ENCODE measurements at regions of chr3 and their contacts with region 1.

Region 1: GRCh38 chr3:186759231-186759930 is 24.0 kb upstream of the EIF4A2 start:
- DNase-seq: no peak
- H3K4me3 ChIP-seq: no peak overlapping the region
- H3K27ac ChIP-seq: no peak overlapping the region
- H3K4me1 ChIP-seq: no peaks in the 10 kb centered on the region
- CTCF ChIP-seq: no peak

Region 2: GRCh38 chr3:186617038-186617946 is 142.1 kb before region 1 on chr3:
- CTCF ChIA-PET with region 1: no interaction called
- POLR2A ChIA-PET with region 1: no interaction called
- intact Hi-C with region 1: loop called (anchors 5 kb)
- DNase-seq: peak; percentile 77
- H3K4me3 ChIP-seq: peak overlapping the region; percentile 12
- H3K27ac ChIP-seq: no peak overlapping the region
- H3K4me1 ChIP-seq: peaks cover 18% of the 10 kb centered on the region
- CTCF ChIP-seq: peak; percentile 92

Measured in OCI-LY7 (cell line).